ENCODE measurements at regions of chr17 and their contacts with region 1.

Region 1: DNA sequence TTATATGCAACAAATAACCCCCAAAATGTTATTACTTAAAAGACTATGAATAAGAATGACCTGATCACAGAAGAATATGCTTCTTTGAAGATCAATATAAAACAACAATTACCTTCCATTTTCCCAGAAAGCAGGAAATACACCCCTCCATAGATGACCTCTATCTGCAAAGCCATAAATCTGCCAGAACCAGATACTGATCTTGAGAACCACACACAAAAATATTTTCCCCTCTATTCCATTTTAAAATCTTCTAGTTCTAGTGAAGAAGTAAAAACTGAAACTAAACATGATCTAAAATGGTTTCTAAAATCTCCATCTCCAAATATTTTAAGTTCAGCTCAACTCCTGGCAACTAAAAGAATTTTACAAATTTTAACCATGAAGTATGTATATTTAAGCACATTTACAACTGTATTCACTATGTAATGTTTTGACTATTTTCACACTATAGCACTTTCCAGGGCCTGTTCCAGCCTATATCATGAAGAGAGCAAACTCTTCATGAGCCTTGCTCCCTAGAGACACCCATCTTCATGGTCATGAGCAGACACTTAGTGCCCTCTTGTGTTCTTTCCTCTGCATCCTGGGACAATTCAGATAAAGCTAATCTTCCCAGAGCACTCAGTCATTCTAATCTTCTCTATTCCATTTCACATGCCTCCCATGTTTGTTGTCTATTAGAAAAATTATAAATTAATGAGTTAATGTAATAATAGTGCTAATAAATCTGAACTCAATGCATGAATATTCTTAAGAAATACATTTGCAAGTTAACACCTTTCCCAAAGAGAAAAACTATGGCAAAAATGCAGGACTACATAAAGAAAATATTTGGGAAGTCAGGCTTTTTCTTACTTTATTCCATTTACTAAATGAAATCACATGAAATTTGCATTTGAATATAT is 87.0 kb downstream of the HELZ start:
- DNase-seq: no peak
- ATAC-seq: peak; percentile 69; the same call in 1 of the 2 replicates
- H3K4me3 Mint-ChIP-seq: no peak overlapping the region
- H3K27ac Mint-ChIP-seq: no peak overlapping the region
- H3K4me1 Mint-ChIP-seq: peaks cover 14% of the 10 kb centered on the region
- H3K27me3 Mint-ChIP-seq: no peaks in the 10 kb centered on the region
- CTCF ChIP-seq: no peak

Region 2: GRCh38 chr17:66892037-66892645 is 265.8 kb before region 1 on chr17:
- CTCF ChIA-PET with region 1: no interaction called
- POLR2A ChIA-PET with region 1: no interaction called
- DNase-seq: no peak
- ATAC-seq: no peak
- H3K4me3 Mint-ChIP-seq: no peak overlapping the region
- H3K27ac Mint-ChIP-seq: no peak overlapping the region
- H3K4me1 Mint-ChIP-seq: 0 out of 2 replicates have a peak, but pooled peaks cover 1% of the 10 kb centered on the region
- H3K27me3 Mint-ChIP-seq: no peaks in the 10 kb centered on the region
- CTCF ChIP-seq: no peak

Region 3: DNA sequence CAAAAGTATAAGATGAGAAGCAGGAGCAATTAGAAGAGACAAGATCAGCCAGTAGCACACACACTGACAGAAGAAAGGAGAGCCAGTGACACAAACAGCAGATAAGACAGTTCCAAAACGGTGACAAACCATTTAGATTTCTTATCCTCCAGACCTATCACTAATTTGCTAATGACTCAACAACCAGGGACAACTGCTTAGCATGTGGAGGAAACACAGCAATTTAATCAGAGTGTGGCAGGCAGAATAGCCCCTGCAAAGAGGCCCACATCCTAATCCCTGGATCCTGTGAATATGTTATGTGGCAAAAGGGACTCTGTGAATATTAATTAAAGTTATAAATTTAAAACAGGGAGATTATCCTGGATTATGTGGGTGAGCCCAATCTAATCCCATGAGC is 32.6 kb before region 1 on chr17:
- CTCF ChIA-PET with region 1: no interaction called
- POLR2A ChIA-PET with region 1: no interaction called
- DNase-seq: no peak
- ATAC-seq: no peak
- H3K4me3 Mint-ChIP-seq: no peak overlapping the region
- H3K27ac Mint-ChIP-seq: no peak overlapping the region; the same call in 1 of the 2 replicates
- H3K4me1 Mint-ChIP-seq: no peaks in the 10 kb centered on the region
- H3K27me3 Mint-ChIP-seq: no peaks in the 10 kb centered on the region
- CTCF ChIP-seq: no peak

Region 4: GRCh38 chr17:67139784-67140657 is 18.0 kb before region 1 on chr17:
- CTCF ChIA-PET with region 1: interaction called, 16 read pairs
- POLR2A ChIA-PET with region 1: no interaction called
- DNase-seq: peak; percentile 30
- ATAC-seq: peak; percentile 93
- H3K4me3 Mint-ChIP-seq: no peak overlapping the region
- H3K27ac Mint-ChIP-seq: peak overlapping the region; percentile 42
- H3K4me1 Mint-ChIP-seq: peaks cover 12% of the 10 kb centered on the region
- H3K27me3 Mint-ChIP-seq: no peaks in the 10 kb centered on the region
- CTCF ChIP-seq: no peak

Region 5: GRCh38 chr17:67280279-67280678 is 122.3 kb after region 1 on chr17:
- CTCF ChIA-PET with region 1: no interaction called
- POLR2A ChIA-PET with region 1: no interaction called
- DNase-seq: no peak
- ATAC-seq: no peak
- H3K4me3 Mint-ChIP-seq: no peak overlapping the region
- H3K27ac Mint-ChIP-seq: no peak overlapping the region
- H3K4me1 Mint-ChIP-seq: peaks cover 21% of the 10 kb centered on the region
- H3K27me3 Mint-ChIP-seq: no peaks in the 10 kb centered on the region
- CTCF ChIP-seq: no peak